Cardiac septum (tissue), 1 donor: ENCODE measurements at regions of chr4 and their contacts with region 1.

Region 1: DNA sequence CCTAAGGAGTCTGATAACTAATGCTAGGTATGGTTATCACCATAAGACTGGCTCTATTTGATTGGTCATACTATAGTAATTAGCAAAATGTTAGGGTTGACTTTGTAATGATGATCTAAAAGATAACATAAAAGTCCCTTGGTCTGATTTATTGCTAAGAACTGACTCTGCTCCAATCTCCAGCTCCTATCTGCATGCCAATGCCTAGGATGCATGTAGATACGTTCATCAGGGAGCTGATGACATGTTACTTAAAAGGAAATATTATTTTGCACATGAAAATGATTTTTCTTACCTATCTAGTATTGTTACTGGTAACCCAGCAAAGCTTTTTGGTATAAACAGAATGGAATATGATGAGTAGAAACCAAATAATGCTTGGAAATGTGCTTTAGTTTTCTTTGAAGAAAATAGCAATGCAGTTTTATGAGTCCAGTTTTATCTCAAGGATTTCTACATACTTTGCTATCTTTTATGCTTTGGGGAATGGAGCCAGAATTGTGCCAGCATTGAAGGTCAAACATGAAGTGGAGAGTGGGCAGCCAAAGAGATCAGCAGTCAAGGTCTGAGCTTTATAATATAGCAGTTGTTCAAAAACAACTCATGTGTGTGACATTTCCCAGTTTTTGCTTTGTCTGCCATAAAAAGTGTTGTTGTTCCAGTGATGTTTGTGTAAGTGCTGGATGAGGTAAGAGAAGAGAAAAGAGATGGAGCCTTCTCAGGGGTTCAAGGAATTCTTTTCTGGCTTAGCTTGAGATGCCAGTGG is 121.0 kb downstream of the ARHGAP24 start:
- DNase-seq: no peak

Region 2: DNA sequence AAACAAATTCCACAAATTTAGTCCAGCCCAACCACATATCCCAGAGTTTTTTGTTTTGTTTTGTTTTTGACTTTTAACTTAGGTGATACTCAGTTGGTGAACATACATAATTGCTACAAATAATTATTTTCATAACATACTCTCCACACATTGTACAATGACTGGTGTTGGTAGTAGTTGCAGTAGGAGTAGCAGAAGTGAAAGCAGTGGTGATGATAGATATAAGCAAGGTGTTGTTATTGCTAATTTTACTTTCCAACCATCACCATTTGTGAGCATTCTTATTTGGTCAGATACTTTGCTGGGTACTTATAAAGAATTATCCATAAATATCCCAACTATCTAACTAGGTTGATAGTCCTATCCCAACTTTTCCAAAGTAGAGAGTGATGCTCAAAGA is 73.7 kb before region 1 on chr4:
- intact Hi-C with region 1: loop called (anchors 5 kb)
- DNase-seq: no peak

Region 3: GRCh38 chr4:85637778-85638177 is 41.8 kb after region 1 on chr4:
- intact Hi-C with region 1: no loop called
- DNase-seq: no peak

Region 4: DNA sequence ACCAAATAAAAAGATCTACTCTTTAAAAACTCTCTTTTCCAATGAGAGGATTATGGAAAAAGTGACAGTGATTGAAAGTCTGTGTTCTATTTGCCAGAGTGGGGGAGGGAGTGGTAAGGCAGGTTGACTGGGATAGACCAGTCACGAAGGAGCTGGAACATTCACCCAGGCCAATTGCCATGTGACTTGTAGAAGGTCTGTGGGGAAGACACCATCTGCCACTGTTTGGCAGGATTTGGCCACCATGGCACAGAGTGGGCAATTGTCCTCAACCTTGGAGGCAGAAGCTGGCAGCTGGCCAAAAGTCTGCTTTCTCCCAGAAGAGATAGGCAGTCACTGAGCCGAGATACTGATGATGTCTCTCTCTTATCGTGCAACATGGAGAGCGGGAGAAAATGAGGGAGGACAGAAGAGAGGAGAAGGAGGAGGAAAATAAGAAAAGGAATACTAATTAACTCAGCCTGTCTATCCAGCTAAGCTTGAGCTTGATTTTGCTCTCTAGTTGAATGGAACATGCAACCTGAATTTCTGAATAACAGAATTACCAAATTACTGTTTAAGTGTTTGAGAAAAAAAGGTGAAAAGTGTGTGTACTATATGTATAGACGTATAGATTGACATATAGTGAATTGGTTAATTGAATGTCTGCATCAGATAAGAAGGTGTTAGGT is 146.1 kb after region 1 on chr4:
- intact Hi-C with region 1: loop called (anchors 5 kb)
- DNase-seq: peak; percentile 77